ENCODE measurements at regions of chr12 and their contacts with region 1.

Region 1: GRCh38 chr12:62435303-62436163 is 31.1 kb upstream of the MON2 start:
- DNase-seq: peak; percentile 16 to 29
- ATAC-seq: peak; percentile 46 to 85 (median 81)
- H3K4me3 ChIP-seq: peak overlapping the region in 9 of 10 donors; percentile 34 to 60 (median 54)
- H3K27ac ChIP-seq: no peak overlapping the region
- H3K4me1 ChIP-seq: peaks cover 0 to 18% (median 13%) of the 10 kb centered on the region in 9 donors
- H3K27me3 ChIP-seq: peaks cover 0 to 43% (median 35%) of the 10 kb centered on the region in 7 donors
- CTCF ChIP-seq: peak in 7 of 9 donors; percentile 19 to 64 (median 55)

Region 2: GRCh38 chr12:62575036-62575435 is 139.5 kb after region 1 on chr12:
- intact Hi-C with region 1: loop called in 1 of 10 experiments (anchors 10 kb)
- DNase-seq: no peak
- ATAC-seq: no peak
- H3K4me3 ChIP-seq: no peak overlapping the region
- H3K27ac ChIP-seq: no peak overlapping the region
- H3K4me1 ChIP-seq: no peaks in the 10 kb centered on the region
- H3K27me3 ChIP-seq: no peaks in the 10 kb centered on the region
- CTCF ChIP-seq: no peak

Region 3: DNA sequence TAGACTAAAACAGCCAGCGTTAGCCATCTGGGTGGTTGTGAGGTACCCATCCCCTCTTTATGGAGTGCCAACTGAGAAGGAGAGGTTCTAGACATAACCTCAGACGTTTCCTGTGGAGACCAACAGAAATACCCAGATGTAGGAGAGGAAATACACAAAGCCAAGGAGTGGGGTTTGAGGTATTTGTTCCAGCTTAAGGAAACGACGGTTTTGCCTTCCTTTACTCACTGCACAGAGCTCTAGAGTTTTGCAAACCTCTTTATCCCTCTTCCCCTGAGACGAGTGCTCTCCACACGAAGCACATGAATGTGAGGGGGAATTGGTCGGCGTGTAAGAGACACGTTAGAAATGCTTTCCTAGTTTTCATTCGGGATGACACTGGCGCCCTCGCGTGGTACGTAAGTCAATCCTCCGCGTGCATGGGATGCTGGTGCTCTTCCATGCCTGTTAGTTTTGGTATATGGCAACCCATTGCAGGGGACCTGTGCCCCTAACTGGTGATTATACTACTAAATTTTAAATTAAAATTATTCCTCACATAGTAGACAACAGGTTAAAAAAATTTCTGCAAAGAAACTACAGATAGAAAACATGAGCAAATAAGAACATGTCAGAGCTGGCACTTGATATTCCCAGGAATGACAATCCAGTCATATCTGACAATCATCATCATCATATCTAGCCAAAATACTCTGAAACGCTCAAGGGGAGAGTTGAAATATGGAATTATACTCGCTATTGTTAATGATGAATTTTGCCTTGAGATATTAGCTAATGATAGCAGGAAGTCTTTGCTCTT is 377.7 kb after region 1 on chr12:
- intact Hi-C with region 1: loop called in 1 of 10 experiments (anchors 5 kb)
- DNase-seq: peak; percentile 59 to 62
- ATAC-seq: peak in 6 of 8 donors; percentile 54 to 84 (median 63)
- H3K4me3 ChIP-seq: peak overlapping the region in 5 of 10 donors; percentile 22 to 33 (median 27)
- H3K27ac ChIP-seq: peak overlapping the region in 1 of 10 donors; percentile 16
- H3K4me1 ChIP-seq: peaks cover 0 to 28% (median 13%) of the 10 kb centered on the region in 9 donors
- H3K27me3 ChIP-seq: no peaks in the 10 kb centered on the region
- CTCF ChIP-seq: peak; percentile 19 to 85 (median 73)

Measured in heart right ventricle (tissue), 16 donors.